T-cell (primary cell): ENCODE measurements at regions of chr1 and their contacts with region 1.

Region 1: GRCh38 chr1:24910751-24911650 is 19.1 kb downstream of the RUNX3 start:
- DNase-seq: peak; percentile 43 to 92 (median 81)
- ATAC-seq: peak; percentile 83 to 88 (median 86)
- H3K4me3 ChIP-seq: peak overlapping the region in 1 of 2 donors; percentile 25
- H3K4me3 Mint-ChIP-seq: peak overlapping the region; percentile 37 to 65 (median 62)
- H3K27ac ChIP-seq: peak overlapping the region; percentile 96
- H3K27ac Mint-ChIP-seq: peak overlapping the region; percentile 93 to 97
- H3K4me1 ChIP-seq: peaks cover 0 to 97% of the 10 kb centered on the region in 2 experiments
- H3K4me1 Mint-ChIP-seq: peaks cover 57 to 86% (median 75%) of the 10 kb centered on the region in 3 donors
- H3K27me3 ChIP-seq: no peaks in the 10 kb centered on the region
- H3K27me3 Mint-ChIP-seq: no peaks in the 10 kb centered on the region

Region 2: GRCh38 chr1:24897767-24898483 is 13.1 kb before region 1 on chr1:
- CTCF ChIA-PET with region 1: interaction called in 1 of 2 experiments, 3 read pairs
- POLR2A ChIA-PET with region 1: interaction called, 8 to 10 read pairs
- DNase-seq: peak in 20 of 35 experiments; percentile 27 to 70 (median 39)
- ATAC-seq: peak; percentile 48 to 59 (median 55)
- H3K4me3 ChIP-seq: no peak overlapping the region
- H3K4me3 Mint-ChIP-seq: no peak overlapping the region
- H3K27ac ChIP-seq: peak overlapping the region; percentile 18
- H3K27ac Mint-ChIP-seq: peak overlapping the region; percentile 36 to 48
- H3K4me1 ChIP-seq: peaks cover 0 to 62% of the 10 kb centered on the region in 2 experiments
- H3K4me1 Mint-ChIP-seq: peaks cover 30 to 41% (median 35%) of the 10 kb centered on the region in 3 donors
- H3K27me3 ChIP-seq: no peaks in the 10 kb centered on the region
- H3K27me3 Mint-ChIP-seq: no peaks in the 10 kb centered on the region

Region 3: DNA sequence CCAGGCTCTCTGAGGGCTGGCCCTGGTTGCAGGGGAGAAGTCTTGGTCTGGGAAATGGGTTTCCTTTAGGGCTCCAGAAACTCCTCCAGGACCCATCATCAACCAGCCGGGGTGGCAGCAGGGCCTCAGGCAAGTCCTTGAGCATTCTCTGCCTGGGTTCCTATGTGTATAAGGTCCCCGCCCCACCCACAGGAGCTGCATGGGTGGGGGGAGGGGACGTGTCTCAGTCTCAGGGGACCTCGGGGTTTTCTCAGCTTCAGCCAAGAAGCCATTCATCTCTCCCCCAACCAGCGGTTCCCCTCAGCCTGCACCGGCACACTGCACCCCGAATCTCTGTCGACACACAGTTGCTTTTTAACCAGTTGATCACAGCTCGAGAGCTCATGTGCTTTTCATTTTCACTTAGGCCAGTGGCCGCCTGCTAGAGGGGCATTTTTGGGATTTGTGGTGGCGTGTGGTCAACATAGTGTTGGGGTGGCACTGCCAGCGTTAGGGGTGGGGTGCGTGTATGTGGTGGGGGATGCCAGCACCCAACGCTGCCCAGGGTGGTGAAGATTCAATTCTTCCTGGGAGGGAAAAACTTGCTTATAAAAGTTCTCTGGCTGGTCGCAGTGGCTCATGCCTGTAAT is 12.6 kb after region 1 on chr1:
- CTCF ChIA-PET with region 1: interaction called, 5 to 11 read pairs
- POLR2A ChIA-PET with region 1: interaction called, 7 to 91 read pairs
- DNase-seq: peak in 17 of 35 experiments; percentile 25 to 63 (median 44)
- ATAC-seq: no peak
- H3K4me3 ChIP-seq: peak overlapping the region in 1 of 2 donors; percentile 22
- H3K4me3 Mint-ChIP-seq: peak overlapping the region; percentile 37 to 98 (median 54)
- H3K27ac ChIP-seq: peak overlapping the region; percentile 96
- H3K27ac Mint-ChIP-seq: peak overlapping the region; percentile 84 to 86
- H3K4me1 ChIP-seq: peaks cover 41 to 93% of the 10 kb centered on the region in 2 experiments
- H3K4me1 Mint-ChIP-seq: peaks cover 61 to 89% (median 81%) of the 10 kb centered on the region in 3 donors
- H3K27me3 ChIP-seq: no peaks in the 10 kb centered on the region
- H3K27me3 Mint-ChIP-seq: no peaks in the 10 kb centered on the region

Region 4: GRCh38 chr1:24930204-24931145 is 19.5 kb after region 1 on chr1 and contains the start of gene RUNX3:
- CTCF ChIA-PET with region 1: interaction called, 5 to 11 read pairs
- POLR2A ChIA-PET with region 1: interaction called, 4 to 91 read pairs
- DNase-seq: peak; percentile 85 to 96 (median 92)
- ATAC-seq: peak; percentile 80 to 87 (median 82)
- H3K4me3 ChIP-seq: peak within 1 kb of the TSS; percentile 87 to 97
- H3K4me3 Mint-ChIP-seq: peak within 1 kb of the TSS; percentile 96 to 98 (median 98)
- H3K27ac ChIP-seq: peak within 1 kb of the TSS; percentile 96
- H3K27ac Mint-ChIP-seq: peak within 1 kb of the TSS; percentile 89 to 96
- H3K4me1 ChIP-seq: peaks cover 32 to 72% of the 10 kb centered on the region in 2 experiments
- H3K4me1 Mint-ChIP-seq: peaks cover 44 to 63% (median 62%) of the 10 kb centered on the region in 3 donors
- H3K27me3 ChIP-seq: peaks cover 0 to 5% of the 10 kb centered on the region in 2 experiments
- H3K27me3 Mint-ChIP-seq: no peaks in the 10 kb centered on the region
- total RNA-seq, gene RUNX3: 140 to 220 (median 145) TPM